ENCODE measurements at regions of chr1 and their contacts with region 1.

Region 1: DNA sequence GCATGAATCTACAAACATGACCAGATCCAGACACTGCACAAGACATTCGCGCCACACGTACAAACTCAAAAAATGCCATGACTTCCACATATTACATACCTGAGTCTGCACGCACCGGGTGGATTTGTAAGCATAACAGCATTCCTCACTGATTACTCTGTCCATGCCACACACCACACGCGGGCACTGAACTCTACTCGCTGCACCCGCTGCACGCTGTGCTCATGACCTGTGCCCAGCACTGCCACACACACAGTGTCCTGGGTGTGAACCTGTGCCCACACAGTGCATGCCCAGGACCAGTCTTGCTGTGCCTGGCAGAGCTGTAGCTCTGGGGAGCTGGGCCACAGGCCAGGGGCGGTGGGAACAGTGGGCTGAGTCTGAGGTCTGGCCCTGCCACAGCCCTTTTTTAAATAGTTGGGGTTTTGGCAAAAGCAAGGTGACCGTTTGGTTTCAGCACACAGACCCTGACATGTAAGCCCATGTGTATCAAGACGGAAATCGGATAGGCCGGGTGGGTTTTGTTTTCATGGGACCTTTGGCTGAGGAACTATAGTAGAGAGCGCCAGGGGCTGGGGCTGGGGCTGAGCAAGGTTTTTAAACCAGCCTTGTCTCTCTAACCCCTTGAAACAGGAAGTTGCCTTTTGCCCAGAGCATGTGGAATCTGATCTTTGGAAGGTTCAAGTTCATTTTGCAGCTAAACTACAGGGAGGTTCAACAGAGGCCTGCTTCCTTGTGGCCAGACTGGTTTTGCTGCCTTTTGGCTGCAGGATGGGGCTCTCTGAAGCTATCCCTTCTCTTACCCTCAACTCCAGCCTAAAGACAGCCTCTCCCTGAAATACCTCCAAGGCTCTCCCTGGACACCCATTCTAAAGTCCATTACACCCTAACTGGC is 12.3 kb upstream of the GOLT1A start:
- DNase-seq: peak; percentile 71
- H3K4me3 Mint-ChIP-seq: no peak overlapping the region
- H3K27ac Mint-ChIP-seq: no peak overlapping the region
- H3K4me1 Mint-ChIP-seq: no peaks in the 10 kb centered on the region
- H3K27me3 Mint-ChIP-seq: no peaks in the 10 kb centered on the region
- CTCF ChIP-seq: no peak

Region 2: DNA sequence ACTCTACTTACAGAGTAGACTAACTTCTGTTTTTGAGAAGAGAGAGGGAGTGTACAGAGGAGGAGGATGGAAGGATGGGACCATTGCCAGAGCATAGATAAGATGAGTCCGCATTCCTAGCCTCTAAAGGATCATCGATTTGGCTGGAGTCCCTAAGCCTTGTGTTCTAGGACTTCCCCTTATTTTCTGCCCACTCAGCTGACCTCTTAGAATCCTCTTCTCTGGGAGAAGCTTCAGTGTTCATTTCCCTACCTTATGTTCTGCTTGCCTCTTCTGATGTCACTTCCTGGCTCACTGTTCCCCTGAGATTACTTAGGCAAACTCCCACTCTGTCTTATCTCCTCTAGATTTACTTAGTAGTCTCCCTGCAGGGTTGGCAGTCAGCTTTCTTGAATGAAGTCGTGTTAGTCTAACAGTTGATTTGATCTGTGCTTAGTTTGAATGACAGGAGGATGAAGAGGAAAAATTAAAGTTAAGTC is 1672.5 kb before region 1 on chr1:
- CTCF ChIA-PET with region 1: interaction called, 12 read pairs
- intact Hi-C with region 1: no loop called
- DNase-seq: no peak
- H3K4me3 Mint-ChIP-seq: no peak overlapping the region
- H3K27ac Mint-ChIP-seq: no peak overlapping the region
- H3K4me1 Mint-ChIP-seq: peaks cover 10% of the 10 kb centered on the region
- H3K27me3 Mint-ChIP-seq: no peaks in the 10 kb centered on the region
- CTCF ChIP-seq: no peak

Measured in Calu3 (cell line).